ENCODE measurements at regions of chr4 and their contacts with region 1.

Region 1: GRCh38 chr4:101730291-101731117 is 60.0 kb upstream of the BANK1 start:
- DNase-seq: no peak
- H3K4me3 ChIP-seq: no peak overlapping the region
- H3K27ac ChIP-seq: no peak overlapping the region
- H3K4me1 ChIP-seq: no peaks in the 10 kb centered on the region
- H3K27me3 ChIP-seq: no peaks in the 10 kb centered on the region
- CTCF ChIP-seq: peak; percentile 51 to 65 (median 51)
- EP300 ChIP-seq: no peak
- POLR2A ChIP-seq: no peak

Region 2: GRCh38 chr4:100093091-100093866 is 1637.2 kb before region 1 on chr4:
- intact Hi-C with region 1: loop called (anchors 10 kb)
- DNase-seq: no peak
- H3K4me3 ChIP-seq: no peak overlapping the region
- H3K27ac ChIP-seq: peak overlapping the region in 1 of 4 donors; percentile 30
- H3K4me1 ChIP-seq: peaks cover 12 to 19% (median 13%) of the 10 kb centered on the region in 4 donors
- H3K27me3 ChIP-seq: no peaks in the 10 kb centered on the region
- CTCF ChIP-seq: peak; percentile 68 to 85 (median 76)
- EP300 ChIP-seq: no peak
- POLR2A ChIP-seq: no peak

Region 3: DNA sequence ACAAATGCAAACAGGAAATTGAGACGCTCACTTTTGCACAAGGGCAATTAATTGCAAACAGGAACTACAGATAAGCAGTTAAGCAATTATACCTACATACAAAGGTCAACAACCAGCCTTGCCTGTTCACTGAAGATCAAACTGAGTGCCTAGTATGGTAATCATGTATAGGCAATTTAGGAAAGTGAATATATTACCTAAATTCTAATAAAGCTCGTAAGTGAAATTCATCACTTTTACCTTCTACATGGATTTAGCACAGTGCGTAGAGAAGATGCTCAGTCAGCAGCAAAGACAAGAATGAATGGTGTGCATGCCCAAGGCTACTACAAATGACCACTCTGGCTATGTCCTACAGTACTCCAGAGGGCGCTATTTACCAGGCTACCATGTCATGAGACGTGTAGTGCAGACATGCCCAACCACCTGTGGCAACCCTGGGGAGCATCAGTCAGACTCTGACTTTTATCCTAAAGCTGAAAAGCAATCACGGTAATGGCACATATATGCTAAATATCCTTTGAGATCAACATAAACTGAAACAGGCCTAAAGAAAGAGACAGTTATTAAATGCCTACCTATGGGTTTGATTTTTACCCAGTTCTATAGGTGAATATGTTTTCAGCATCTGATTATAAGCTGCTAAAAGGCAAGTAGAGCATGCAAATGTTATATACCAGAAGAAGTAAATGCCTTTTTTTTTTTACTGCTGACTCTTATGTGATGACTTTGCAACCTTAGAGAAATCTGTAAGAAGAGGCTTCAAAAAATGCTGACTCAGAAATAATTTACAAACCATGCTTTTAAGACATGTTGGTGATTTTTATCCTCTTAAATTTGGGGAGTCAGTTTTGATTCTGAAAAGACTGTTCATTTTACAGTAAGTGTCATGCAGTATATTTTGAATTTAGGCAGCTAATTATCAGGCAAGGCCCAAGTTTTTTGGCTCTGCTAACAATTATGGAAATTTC is 561.2 kb before region 1 on chr4:
- intact Hi-C with region 1: loop called (anchors 5 kb)
- DNase-seq: no peak
- H3K4me3 ChIP-seq: no peak overlapping the region
- H3K27ac ChIP-seq: no peak overlapping the region
- H3K4me1 ChIP-seq: peaks cover 0 to 43% (median 27%) of the 10 kb centered on the region in 4 donors
- H3K27me3 ChIP-seq: no peaks in the 10 kb centered on the region
- CTCF ChIP-seq: peak; percentile 51 to 66 (median 54)
- EP300 ChIP-seq: no peak
- POLR2A ChIP-seq: no peak

Region 4: DNA sequence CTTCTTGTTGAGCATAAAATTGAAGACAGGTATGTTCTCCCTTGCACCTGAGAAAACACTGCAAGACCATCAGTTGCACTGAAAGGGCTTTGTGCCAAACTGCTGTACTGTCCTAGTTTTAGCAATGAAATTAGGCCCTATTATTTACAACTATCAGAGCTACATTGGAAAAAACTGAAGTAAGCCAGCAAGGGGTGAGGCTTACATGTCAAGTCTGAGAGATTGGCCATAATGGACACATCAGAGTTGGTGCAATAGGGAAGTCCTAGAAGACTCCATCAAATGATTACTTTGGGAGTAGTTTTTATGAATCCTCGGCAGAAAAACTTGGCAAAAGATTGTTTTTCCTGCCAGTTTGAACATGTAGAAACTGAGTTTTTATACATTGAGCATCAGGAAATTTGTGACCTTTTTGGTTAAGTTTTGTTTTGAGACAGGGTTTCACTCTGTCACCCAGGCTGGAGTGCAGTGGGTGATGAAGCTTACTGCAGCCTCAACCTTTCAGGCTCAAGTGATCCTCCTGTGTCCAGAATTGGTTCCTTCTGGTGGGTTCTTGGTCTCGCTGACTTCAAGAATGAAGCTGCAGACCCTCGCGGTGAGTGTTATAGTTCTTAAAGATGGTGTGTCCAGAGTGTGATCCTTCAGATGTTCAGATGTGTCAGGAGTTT is 100.1 kb before region 1 on chr4:
- intact Hi-C with region 1: no loop called
- DNase-seq: no peak
- H3K4me3 ChIP-seq: no peak overlapping the region
- H3K27ac ChIP-seq: no peak overlapping the region
- H3K4me1 ChIP-seq: no peaks in the 10 kb centered on the region
- H3K27me3 ChIP-seq: no peaks in the 10 kb centered on the region
- CTCF ChIP-seq: no peak
- EP300 ChIP-seq: no peak
- POLR2A ChIP-seq: no peak

Measured in esophagus muscularis mucosa (tissue), 4 donors.